ENCODE measurements at regions of chr9 and their contacts with region 1.

Region 1: DNA sequence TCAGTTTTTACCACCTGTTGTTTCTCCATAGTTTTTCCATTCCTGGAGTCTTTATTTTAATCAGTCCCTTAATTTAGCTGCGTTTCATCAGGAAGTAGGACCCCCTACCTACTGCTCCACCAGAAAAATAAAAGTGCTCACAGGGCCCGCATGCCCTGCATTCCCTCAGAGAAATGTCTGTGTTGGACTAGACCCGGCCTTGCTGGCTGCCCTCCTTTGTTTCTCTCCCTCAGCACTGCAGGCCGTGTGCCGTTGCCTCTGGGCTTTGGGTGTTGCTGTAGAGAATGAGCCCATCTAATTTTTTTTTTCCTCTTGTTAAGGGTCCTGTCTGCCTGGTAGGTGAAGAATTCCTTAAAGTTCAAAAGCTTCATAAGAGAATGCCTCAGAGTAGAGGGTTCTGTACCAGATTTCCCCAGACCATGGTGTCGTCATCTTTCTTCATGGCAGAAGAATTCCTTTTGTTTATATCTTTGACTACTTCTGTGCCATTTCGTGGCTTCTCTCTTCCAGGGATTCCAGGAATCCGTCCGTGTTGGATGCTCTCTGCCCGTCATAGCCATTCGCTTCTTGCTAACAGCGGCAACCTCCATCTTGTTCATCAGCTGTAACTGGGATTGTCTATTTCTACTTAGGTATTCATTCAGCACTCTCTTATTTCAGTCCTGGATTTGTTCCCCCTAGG is 49.7 kb upstream of the ANGPTL2 start:
- DNase-seq: no peak
- ATAC-seq: no peak
- H3K4me3 ChIP-seq: no peak overlapping the region
- H3K27ac ChIP-seq: no peak overlapping the region
- H3K4me1 ChIP-seq: peaks cover 6% of the 10 kb centered on the region
- H3K27me3 ChIP-seq: no peaks in the 10 kb centered on the region
- CTCF ChIP-seq: no peak
- EP300 ChIP-seq: no peak
- POLR2A ChIP-seq: no peak
- RAD21 ChIP-seq: no peak

Region 2: DNA sequence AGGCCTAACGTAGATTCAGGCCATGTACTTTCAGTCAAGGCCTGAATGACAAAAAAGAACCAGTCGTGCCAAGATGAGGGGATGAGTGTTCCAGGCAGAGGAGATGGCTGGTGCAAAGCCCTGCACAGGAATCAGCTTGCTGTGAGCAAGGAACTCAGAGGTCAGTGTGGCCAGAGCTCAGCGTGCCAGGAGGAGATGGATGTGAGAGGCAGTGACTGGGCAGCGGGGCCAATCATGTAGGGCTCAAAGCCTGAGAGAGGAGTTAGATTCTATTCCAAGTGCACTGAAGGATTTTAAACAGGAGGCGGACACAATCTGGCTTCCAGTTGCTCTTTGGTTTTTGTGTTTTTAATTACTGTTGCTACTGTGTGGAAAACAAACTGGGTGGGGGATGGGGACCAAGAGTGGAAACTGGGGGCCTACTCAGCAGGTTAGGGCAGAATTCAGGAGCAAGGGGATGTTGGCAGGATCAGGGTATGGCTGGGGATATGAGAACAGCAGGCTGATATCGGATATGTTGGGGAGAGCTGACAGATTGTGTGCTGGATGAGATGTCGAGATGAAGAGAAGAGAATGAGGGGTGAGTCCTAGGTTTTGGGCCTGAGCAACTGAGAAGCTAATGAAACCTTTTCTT is 114.0 kb before region 1 on chr9:
- CTCF ChIA-PET with region 1: interaction called, 3 read pairs
- POLR2A ChIA-PET with region 1: interaction called, 38 read pairs
- RAD21 ChIA-PET with region 1: interaction called, 59 read pairs
- SMC1A ChIA-PET with region 1: interaction called, 71 read pairs
- in situ Hi-C with region 1: no loop called
- intact Hi-C with region 1: no loop called
- DNase-seq: no peak
- ATAC-seq: no peak
- H3K4me3 ChIP-seq: no peak overlapping the region
- H3K27ac ChIP-seq: no peak overlapping the region
- H3K4me1 ChIP-seq: peaks cover 5% of the 10 kb centered on the region
- H3K27me3 ChIP-seq: no peaks in the 10 kb centered on the region
- CTCF ChIP-seq: no peak
- EP300 ChIP-seq: no peak
- POLR2A ChIP-seq: no peak
- RAD21 ChIP-seq: no peak

Region 3: DNA sequence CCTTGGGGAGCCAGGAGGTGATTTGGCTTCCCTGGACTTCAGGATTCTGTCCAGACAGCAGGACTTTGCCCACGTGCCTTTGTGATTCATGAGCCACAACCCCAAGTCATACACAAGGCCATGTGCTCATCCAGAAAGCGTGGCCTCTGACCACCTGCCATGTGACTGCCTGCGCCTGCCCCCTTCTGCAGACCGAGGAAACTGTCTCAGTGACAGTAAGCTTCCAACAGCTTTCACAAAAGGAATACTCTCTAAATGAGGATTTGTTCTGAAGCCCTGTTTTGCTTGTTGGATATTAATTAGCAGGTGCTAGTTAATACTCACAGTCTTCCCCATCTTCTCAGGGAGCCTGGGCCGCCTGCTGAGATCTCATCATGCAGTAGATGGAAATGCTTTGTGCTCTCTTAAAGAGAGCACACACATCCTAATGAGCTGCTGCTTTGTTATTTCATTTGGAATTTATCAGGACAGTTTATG is 12.8 kb before region 1 on chr9:
- CTCF ChIA-PET with region 1: interaction called, 12 read pairs
- POLR2A ChIA-PET with region 1: interaction called, 270 read pairs
- RAD21 ChIA-PET with region 1: interaction called, 515 read pairs
- SMC1A ChIA-PET with region 1: interaction called, 812 read pairs
- in situ Hi-C with region 1: no loop called
- intact Hi-C with region 1: no loop called
- DNase-seq: no peak
- ATAC-seq: peak; percentile 30; the same call in 2 of the 3 replicates
- H3K4me3 ChIP-seq: no peak overlapping the region
- H3K27ac ChIP-seq: no peak overlapping the region
- H3K4me1 ChIP-seq: peaks cover 27% of the 10 kb centered on the region
- H3K27me3 ChIP-seq: no peaks in the 10 kb centered on the region
- CTCF ChIP-seq: peak in 1 of 3 experiments; percentile 16; a peak in 1 of 6 replicates
- EP300 ChIP-seq: no peak
- POLR2A ChIP-seq: no peak
- RAD21 ChIP-seq: no peak; the same call in 1 of the 2 replicates

Region 4: DNA sequence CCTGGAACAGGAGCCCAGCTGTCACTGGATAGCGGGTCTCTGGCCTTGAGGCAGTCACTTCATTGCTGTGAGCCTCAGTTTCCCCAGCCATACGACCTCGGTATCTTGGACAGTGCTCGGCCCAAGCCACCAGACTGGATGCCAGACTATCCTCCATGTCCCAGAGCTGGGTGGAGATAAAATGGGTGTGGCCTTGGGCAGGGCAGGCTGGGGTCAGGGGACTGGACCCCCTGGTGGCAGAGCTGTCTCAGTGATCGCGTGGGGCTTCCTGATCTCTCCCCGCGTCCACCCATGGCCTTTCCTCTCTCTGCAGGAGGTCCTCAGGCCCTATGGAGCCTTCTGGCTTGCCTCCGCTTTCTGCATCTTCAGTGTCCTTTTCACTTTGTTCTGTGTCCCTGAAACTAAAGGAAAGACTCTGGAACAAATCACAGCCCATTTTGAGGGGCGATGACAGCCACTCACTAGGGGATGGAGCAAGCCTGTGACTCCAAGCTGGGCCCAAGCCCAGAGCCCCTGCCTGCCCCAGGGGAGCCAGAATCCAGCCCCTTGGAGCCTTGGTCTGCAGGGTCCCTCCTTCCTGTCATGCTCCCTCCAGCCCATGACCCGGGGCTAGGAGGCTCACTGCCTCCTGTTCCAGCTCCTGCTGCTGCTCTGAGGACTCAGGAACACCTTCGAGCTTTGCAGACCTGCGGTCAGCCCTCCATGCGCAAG is 234.8 kb after region 1 on chr9:
- CTCF ChIA-PET with region 1: no interaction called
- POLR2A ChIA-PET with region 1: no interaction called
- RAD21 ChIA-PET with region 1: no interaction called
- SMC1A ChIA-PET with region 1: no interaction called
- in situ Hi-C with region 1: no loop called
- intact Hi-C with region 1: no loop called
- DNase-seq: no peak
- ATAC-seq: no peak
- H3K4me3 ChIP-seq: no peak overlapping the region
- H3K27ac ChIP-seq: no peak overlapping the region
- H3K4me1 ChIP-seq: no peaks in the 10 kb centered on the region
- H3K27me3 ChIP-seq: no peaks in the 10 kb centered on the region
- CTCF ChIP-seq: no peak
- EP300 ChIP-seq: no peak
- POLR2A ChIP-seq: no peak; the same call in 1 of the 2 replicates
- RAD21 ChIP-seq: no peak